B cell (primary cell): ENCODE measurements at regions of chr19 and their contacts with region 1.

Region 1: GRCh38 chr19:3062168-3063102 is at the start of gene TLE5:
- DNase-seq: peak; percentile 84
- ATAC-seq: peak; percentile 48
- H3K4me3 ChIP-seq: peak within 1 kb of the TSS; percentile 44 to 85 (median 80)
- H3K4me3 Mint-ChIP-seq: peak within 1 kb of the TSS; percentile 92
- H3K27ac ChIP-seq: peak within 1 kb of the TSS; percentile 83 to 90
- H3K27ac Mint-ChIP-seq: peak within 1 kb of the TSS; percentile 95
- H3K4me1 ChIP-seq: peaks cover 46 to 76% of the 10 kb centered on the region in 2 donors
- H3K4me1 Mint-ChIP-seq: peaks cover 61% of the 10 kb centered on the region
- H3K27me3 ChIP-seq: no peaks in the 10 kb centered on the region
- H3K27me3 Mint-ChIP-seq: no peaks in the 10 kb centered on the region
- CTCF ChIP-seq: no peak
- total RNA-seq, gene TLE5: 665 and 697 TPM in 2 replicates

Region 2: DNA sequence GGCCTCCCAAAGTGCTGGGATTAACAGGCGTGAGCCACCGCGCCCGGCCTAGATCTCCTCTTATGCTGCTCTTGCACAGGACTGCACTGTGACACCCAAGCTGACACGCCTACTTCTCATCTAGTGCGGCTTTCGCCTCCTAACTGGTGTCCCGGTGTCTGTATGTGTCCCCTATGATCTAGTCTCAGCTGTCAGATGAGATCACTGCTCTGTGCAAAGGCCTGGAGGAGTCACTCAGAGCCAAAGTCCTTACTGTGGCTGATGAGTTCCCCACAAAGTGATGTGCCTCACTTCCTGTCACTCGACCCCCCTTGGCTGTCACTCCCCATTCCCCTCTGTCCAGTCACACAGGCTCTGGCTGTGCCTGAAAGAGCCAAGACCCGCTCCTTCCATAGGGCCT is 192.8 kb before region 1 on chr19:
- CTCF ChIA-PET with region 1: no interaction called
- POLR2A ChIA-PET with region 1: no interaction called
- intact Hi-C with region 1: no loop called
- DNase-seq: no peak
- ATAC-seq: no peak
- H3K4me3 ChIP-seq: no peak overlapping the region
- H3K4me3 Mint-ChIP-seq: no peak overlapping the region
- H3K27ac ChIP-seq: no peak overlapping the region
- H3K27ac Mint-ChIP-seq: no peak overlapping the region
- H3K4me1 ChIP-seq: no peaks in the 10 kb centered on the region
- H3K4me1 Mint-ChIP-seq: peaks cover 5% of the 10 kb centered on the region
- H3K27me3 ChIP-seq: no peaks in the 10 kb centered on the region
- H3K27me3 Mint-ChIP-seq: peaks cover 8% of the 10 kb centered on the region
- CTCF ChIP-seq: no peak

Region 3: GRCh38 chr19:3047425-3048189 is 14.8 kb before region 1 on chr19:
- CTCF ChIA-PET with region 1: interaction called, 4 read pairs
- POLR2A ChIA-PET with region 1: interaction called, 7 read pairs
- intact Hi-C with region 1: loop called (anchors 1 kb)
- DNase-seq: peak; percentile 67
- ATAC-seq: peak; percentile 79
- H3K4me3 ChIP-seq: peak overlapping the region; percentile 33 to 64 (median 48)
- H3K4me3 Mint-ChIP-seq: peak overlapping the region; percentile 92
- H3K27ac ChIP-seq: no peak overlapping the region
- H3K27ac Mint-ChIP-seq: peak overlapping the region; percentile 86
- H3K4me1 ChIP-seq: peaks cover 8 to 18% of the 10 kb centered on the region in 2 donors
- H3K4me1 Mint-ChIP-seq: peaks cover 19% of the 10 kb centered on the region
- H3K27me3 ChIP-seq: no peaks in the 10 kb centered on the region
- H3K27me3 Mint-ChIP-seq: peaks cover 2% of the 10 kb centered on the region
- CTCF ChIP-seq: no peak

Region 4: GRCh38 chr19:3094601-3095437 is 32.4 kb after region 1 on chr19:
- CTCF ChIA-PET with region 1: interaction called, 5 read pairs
- POLR2A ChIA-PET with region 1: interaction called, 4 read pairs
- intact Hi-C with region 1: loop called (anchors 1 kb)
- DNase-seq: peak; percentile 70
- ATAC-seq: peak; percentile 37
- H3K4me3 ChIP-seq: peak overlapping the region in 4 of 5 experiments; percentile 41 to 71 (median 58)
- H3K4me3 Mint-ChIP-seq: peak overlapping the region; percentile 84
- H3K27ac ChIP-seq: no peak overlapping the region
- H3K27ac Mint-ChIP-seq: peak overlapping the region; percentile 46
- H3K4me1 ChIP-seq: peaks cover 35 to 46% of the 10 kb centered on the region in 2 donors
- H3K4me1 Mint-ChIP-seq: peaks cover 28% of the 10 kb centered on the region
- H3K27me3 ChIP-seq: peaks cover 0 to 24% (median 10%) of the 10 kb centered on the region in 4 experiments
- H3K27me3 Mint-ChIP-seq: peaks cover 8% of the 10 kb centered on the region
- CTCF ChIP-seq: no peak

Region 5: GRCh38 chr19:3185482-3186376 is 123.3 kb after region 1 on chr19 and contains the start of gene NCLN:
- CTCF ChIA-PET with region 1: no interaction called
- POLR2A ChIA-PET with region 1: interaction called, 5 read pairs
- intact Hi-C with region 1: loop called (anchors 10 kb)
- DNase-seq: peak; percentile 98
- ATAC-seq: peak; percentile 88
- H3K4me3 ChIP-seq: peak within 1 kb of the TSS; percentile 61 to 88 (median 79)
- H3K4me3 Mint-ChIP-seq: peak within 1 kb of the TSS; percentile 93
- H3K27ac ChIP-seq: peak within 1 kb of the TSS; percentile 62 to 77
- H3K27ac Mint-ChIP-seq: peak within 1 kb of the TSS; percentile 94
- H3K4me1 ChIP-seq: peaks cover 51 to 83% of the 10 kb centered on the region in 2 donors
- H3K4me1 Mint-ChIP-seq: peaks cover 66% of the 10 kb centered on the region
- H3K27me3 ChIP-seq: no peaks in the 10 kb centered on the region
- H3K27me3 Mint-ChIP-seq: no peaks in the 10 kb centered on the region
- CTCF ChIP-seq: no peak
- total RNA-seq, gene NCLN: 53.6 and 55.0 TPM in 2 replicates